ENCODE measurements at regions of chr6 and their contacts with region 1.

Region 1: DNA sequence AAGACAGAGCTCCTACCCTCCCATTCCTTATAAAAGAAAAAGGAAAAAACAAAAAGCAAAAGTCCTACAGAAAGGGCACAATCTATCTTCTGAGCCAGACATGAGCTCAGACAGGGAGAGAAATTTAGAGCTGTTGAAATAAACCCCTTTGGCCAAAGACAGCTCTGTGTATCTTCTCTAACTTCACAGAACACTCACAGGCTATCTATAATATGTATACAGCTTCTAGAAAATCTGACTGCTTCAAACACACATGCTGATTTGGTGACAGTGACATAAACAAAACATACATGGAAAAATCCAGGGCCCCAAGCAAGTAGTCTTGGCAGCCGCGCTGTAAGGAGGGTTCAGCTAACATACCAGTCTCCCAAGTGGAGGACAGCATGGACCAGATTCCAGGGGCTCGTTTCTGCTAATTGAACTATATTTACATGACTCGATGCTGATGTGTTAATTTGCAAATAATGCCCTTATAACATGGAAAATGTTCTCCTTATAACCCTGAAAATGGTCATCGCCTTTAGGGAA is 37.0 kb downstream of the MTFR2 start:
- DNase-seq: no peak
- H3K4me3 Mint-ChIP-seq: no peak overlapping the region
- H3K27ac Mint-ChIP-seq: no peak overlapping the region
- H3K4me1 Mint-ChIP-seq: no peaks in the 10 kb centered on the region
- H3K27me3 Mint-ChIP-seq: no peaks in the 10 kb centered on the region
- CTCF ChIP-seq: no peak

Region 2: DNA sequence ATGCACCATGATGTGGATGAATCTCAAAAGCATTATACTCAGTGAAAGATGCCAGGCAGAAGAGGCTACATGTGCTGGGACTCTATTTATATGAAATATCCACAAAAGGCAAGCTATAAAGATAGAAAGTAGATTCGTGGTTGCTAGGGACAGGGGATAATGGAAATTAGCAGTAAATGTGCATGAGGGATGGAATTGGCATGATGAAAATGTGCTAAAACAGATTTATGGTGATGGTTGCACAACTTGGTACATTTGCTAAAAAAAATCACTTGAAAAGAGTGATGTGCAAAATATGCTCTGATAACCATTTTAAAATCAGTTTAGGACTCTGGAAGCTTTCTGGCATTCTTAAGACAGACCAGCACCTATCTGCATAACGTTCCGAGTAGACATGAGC is 1324.8 kb before region 1 on chr6:
- CTCF ChIA-PET with region 1: no interaction called
- intact Hi-C with region 1: no loop called
- DNase-seq: no peak
- H3K4me3 Mint-ChIP-seq: no peak overlapping the region
- H3K27ac Mint-ChIP-seq: no peak overlapping the region
- H3K4me1 Mint-ChIP-seq: no peaks in the 10 kb centered on the region
- H3K27me3 Mint-ChIP-seq: peaks cover 12% of the 10 kb centered on the region
- CTCF ChIP-seq: no peak

Region 3: GRCh38 chr6:137989664-137990063 is 1776.6 kb after region 1 on chr6:
- CTCF ChIA-PET with region 1: interaction called, 10 read pairs
- intact Hi-C with region 1: no loop called
- DNase-seq: no peak
- H3K4me3 Mint-ChIP-seq: no peak overlapping the region
- H3K27ac Mint-ChIP-seq: no peak overlapping the region
- H3K4me1 Mint-ChIP-seq: no peaks in the 10 kb centered on the region
- H3K27me3 Mint-ChIP-seq: peaks cover 16% of the 10 kb centered on the region
- CTCF ChIP-seq: no peak